ENCODE measurements at regions of chr11 and their contacts with region 1.

Region 1: DNA sequence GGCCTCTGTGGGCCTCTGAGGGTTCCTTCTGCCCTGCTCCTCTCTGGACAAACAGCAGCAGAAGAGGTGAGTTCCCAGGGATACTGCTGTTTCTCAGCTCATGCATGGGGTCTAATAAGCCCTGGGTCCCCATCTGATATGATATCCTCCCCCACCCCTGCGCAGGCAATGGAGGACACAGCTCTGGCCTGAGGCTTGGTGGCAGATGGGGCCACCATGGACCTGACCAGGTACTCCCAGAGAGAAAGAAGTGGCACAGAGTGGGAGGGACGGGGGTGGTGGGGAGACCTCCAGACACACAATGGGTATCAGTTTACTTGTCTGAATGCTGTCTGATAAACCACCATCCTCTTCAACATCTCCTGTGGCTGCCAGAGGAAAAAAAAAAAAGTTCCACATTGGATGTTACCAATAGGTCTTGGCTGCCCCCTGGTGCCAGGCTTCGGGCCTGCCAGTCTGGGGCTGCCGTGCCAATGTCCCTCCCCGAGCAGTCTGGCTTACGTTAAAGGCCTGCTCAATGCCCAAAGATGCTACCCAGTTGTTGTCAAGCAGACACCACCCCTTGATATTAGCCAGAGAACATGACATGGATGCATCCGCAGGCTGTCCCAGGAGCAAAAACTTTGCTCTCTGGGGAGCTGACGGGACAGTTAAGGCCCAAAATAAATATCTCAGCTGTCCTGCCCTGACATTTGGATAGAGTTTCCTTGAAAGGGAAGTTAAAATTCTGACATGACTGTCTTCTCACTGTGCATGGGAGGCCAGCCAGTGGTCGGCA is 27.9 kb upstream of the ABCC8 start:
- DNase-seq: peak; percentile 81
- CTCF ChIP-seq: peak; percentile 82

Region 2: GRCh38 chr11:16785520-16786128 is 718.9 kb before region 1 on chr11:
- in situ Hi-C with region 1: loop called (anchors 25 kb)
- DNase-seq: peak; percentile 86
- CTCF ChIP-seq: peak; percentile 90

Region 3: DNA sequence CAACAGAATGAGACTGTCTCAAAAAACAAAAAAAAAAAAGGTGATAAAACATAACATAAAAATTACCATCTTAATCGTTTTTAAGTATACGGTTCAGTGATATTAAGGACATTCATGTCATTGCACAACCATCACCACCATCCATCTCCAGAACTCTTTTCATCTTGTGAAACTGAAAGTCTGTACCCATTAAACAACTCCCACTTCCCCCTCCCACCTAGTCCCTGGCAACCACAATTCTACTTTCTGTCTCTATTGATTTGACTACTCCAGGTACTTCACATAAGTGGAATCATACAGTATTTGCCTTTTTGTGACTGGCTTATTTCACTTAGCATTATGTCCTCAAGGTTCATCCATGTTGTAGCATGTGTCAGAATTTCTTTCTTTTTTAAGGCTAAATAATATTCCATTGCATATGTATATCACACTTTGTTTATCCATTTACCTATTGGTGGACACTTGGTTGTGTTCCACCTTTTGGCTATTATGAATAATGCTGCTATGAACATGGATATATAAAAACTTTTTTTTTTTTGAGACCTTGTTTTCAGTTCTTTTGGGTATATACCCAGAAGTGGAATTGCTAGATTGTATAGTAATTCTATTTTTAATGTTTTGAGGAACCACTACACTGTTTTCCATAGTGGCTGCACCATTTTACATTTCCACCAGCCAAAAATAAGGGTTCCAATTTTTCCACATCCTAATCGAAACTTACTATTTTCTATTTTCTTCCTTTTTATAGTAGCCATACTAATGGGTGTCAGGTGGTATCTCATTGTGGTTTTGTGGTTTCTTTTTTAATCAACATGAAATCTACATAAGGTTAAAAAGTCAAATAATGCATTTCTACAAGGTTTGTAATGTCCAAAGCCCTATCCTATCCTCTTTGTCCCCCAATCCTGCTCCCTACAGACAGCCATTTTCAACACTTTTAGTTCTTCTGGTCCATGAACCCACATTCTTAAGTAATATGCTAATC is 273.4 kb before region 1 on chr11:
- in situ Hi-C with region 1: loop called (anchors 25 kb)
- DNase-seq: peak; percentile 26
- CTCF ChIP-seq: no peak

Region 4: DNA sequence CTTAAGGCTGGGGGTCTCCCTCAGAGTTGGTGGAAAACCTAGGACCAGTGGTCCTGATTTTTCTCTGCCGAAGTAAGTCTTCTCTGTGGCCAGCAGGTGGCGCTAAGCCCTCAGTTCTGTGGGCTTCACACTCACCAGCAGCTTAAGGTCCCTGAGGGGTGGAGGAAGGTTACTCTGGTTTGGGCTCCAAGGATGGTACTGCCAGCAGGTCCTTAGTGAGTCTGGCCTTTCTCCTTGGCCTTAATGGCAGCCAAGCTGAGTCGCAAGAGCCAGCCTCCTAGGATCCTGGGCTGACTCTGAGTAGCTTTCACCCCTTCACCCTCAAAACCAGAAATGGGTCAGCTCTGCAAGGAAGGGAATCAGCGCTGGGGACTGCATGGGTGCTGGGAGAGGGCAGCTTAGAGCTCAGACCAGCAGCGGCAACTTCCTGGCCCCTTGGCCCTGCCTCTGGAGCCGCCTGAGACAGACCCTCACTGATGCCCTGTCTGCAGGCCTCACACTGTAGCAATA is 120.5 kb before region 1 on chr11:
- in situ Hi-C with region 1: loop called (anchors 10 kb)
- DNase-seq: peak; percentile 61
- CTCF ChIP-seq: peak; percentile 87

Measured in GM13977 (cell line).